Mammary epithelial cell (primary cell): ENCODE measurements at regions of chr16 and their contacts with region 1.

Region 1: GRCh38 chr16:27538508-27538907 is 11.2 kb downstream of the GTF3C1 start:
- DNase-seq: no peak
- H3K4me3 ChIP-seq: no peak overlapping the region
- H3K27ac ChIP-seq: no peak overlapping the region
- H3K4me1 ChIP-seq: no peaks in the 10 kb centered on the region
- H3K27me3 ChIP-seq: no peaks in the 10 kb centered on the region
- CTCF ChIP-seq: no peak

Region 2: DNA sequence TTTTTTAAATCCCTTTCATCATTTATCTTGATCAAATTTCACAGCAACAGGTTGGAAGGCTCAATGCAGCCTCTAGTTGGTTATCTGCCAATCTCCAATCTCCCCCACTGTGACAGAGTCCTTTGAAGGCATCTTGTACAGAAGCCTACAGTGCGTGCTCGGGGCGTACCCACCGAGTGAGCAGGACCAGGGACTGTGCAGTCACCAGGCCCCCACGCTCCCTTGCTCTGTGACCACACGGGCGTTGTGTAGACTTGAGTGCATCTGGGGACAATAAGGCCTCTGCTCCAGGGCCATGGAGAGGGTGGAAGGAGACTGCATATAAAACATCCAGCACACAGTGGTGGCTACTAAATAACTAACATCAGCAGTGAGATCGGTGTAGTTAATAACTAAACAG is 52.2 kb before region 1 on chr16:
- CTCF ChIA-PET with region 1: no interaction called
- dilution Hi-C with region 1: no loop called
- in situ Hi-C with region 1: loop called in 1 of 2 experiments (anchors 5 kb)
- intact Hi-C with region 1: no loop called
- DNase-seq: no peak
- H3K4me3 ChIP-seq: no peak overlapping the region
- H3K27ac ChIP-seq: no peak overlapping the region
- H3K4me1 ChIP-seq: no peaks in the 10 kb centered on the region
- H3K27me3 ChIP-seq: no peaks in the 10 kb centered on the region
- CTCF ChIP-seq: no peak

Region 3: DNA sequence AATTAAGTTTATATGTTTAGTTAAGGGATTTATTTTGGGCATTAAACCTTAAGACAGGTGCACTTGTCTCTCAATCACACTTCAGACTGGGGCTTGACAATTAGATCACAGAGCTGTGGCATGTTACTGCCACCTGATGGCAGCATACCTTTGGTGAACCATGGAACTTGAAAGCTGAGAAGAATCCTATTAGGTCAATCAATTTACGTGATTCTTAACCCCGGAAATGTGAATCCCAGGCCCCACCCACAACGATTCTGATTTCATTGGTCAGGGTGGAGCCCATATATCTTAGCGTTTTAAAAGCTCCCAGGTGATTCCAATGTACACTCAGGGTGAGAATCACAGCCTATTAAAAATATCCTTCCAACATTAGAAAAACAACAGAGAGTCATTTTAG is 434.0 kb after region 1 on chr16:
- CTCF ChIA-PET with region 1: no interaction called
- dilution Hi-C with region 1: no loop called
- in situ Hi-C with region 1: no loop called
- intact Hi-C with region 1: no loop called
- DNase-seq: peak; percentile 55
- H3K4me3 ChIP-seq: no peak overlapping the region
- H3K27ac ChIP-seq: no peak overlapping the region
- H3K4me1 ChIP-seq: no peaks in the 10 kb centered on the region
- H3K27me3 ChIP-seq: no peaks in the 10 kb centered on the region
- CTCF ChIP-seq: peak; percentile 57 to 76